CD8-positive, alpha-beta T cell (primary cell): ENCODE measurements at regions of chr6 and their contacts with region 1.

Region 1: DNA sequence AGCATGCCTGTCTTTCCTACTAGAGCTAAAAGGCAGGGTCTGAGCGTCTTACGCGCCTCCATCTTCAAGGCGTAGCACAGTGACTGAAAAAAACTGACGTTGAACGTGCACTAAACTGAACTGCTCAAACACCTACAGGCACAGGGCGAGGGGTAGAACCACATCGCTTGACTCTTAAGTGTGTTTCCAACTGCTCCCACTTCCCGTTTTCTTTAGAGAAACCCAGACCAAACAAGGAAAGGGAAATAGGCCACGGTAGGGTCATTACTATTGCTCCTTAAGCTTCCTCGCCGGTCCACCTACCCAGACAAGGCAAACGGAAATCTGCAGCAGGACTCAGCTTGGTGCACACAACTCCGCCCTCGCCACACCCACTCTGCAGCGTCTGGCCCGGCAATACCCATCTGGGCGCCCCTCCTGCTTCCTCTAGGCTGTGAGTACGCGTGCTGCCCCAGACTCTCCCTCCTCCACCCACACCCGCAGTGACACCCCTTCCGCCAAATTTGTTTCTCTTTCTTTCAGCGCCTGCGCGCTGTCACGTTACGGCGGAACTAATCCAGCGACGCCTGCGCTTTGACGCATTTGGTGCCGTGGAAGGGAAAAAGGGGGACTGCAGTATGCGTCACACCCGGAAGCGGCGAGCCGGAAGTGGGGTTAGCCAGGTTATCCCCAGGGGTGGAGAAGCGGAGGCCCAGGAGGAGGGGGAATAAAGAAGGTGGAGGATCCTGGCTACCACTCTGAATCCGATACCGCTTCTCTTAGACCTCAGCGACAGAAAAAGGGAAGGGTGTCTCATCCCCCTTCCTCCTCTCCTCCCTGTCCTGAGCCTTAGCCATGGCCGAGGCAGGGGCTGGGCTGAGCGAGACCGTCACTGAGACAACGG is at the start of gene PPP1R11:
- DNase-seq: peak; percentile 96 to 100 (median 98)
- ATAC-seq: peak; percentile 96
- H3K4me3 ChIP-seq: peak within 1 kb of the TSS; percentile 95 to 98
- H3K4me3 Mint-ChIP-seq: peak within 1 kb of the TSS; percentile 100
- H3K27ac ChIP-seq: peak within 1 kb of the TSS; percentile 96 to 99
- H3K27ac Mint-ChIP-seq: peak within 1 kb of the TSS; percentile 100
- H3K4me1 ChIP-seq: peaks cover 44% of the 10 kb centered on the region
- H3K4me1 Mint-ChIP-seq: peaks cover 56% of the 10 kb centered on the region
- H3K27me3 ChIP-seq: peaks cover 0 to 1% of the 10 kb centered on the region in 2 experiments
- H3K27me3 Mint-ChIP-seq: peaks cover 12% of the 10 kb centered on the region
- CTCF ChIP-seq: no peak
- total RNA-seq, gene PPP1R11: 24.7 to 28.3 TPM

Region 2: DNA sequence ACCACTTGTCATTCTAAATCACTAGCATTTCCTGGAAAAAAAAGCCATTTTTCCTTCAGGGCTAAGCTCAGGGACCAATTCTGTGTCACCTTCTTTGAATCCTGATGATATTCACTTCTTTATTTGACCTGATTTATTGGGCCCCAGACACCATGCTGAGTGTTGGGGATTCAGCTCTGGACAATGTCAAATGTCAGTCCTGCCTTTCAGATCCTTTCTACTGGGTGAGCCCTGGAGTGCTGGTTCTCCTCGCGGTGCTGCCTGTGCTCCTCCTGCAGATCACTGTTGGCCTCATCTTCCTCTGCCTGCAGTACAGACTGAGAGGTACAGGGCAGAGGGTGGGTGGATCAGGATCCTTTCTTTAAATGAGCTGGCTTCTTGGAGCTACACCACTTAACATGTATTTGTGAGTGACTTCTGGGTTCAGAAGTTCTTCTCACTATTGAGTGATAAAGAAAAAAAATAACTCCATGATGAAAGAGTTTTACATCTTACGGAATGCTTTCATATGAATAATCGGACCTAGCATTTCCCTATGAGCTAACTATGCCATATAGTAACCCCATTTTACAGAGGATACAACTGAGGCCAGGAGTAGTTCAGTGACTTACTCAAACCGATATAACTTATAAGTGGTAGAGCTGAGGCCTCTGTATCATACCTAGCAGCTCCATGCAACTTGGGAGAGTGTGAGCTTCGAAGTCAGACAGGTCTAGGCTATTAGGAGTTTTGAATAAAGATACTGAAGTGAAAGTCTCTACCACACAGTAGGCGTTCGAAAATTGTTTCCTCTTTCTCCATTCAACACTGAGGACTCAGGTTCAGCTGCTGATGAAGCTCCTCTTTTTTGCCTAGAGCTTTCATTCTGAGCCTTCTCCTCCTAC is 400.6 kb before region 1 on chr6:
- CTCF ChIA-PET with region 1: no interaction called
- POLR2A ChIA-PET with region 1: no interaction called
- intact Hi-C with region 1: no loop called
- DNase-seq: no peak
- ATAC-seq: no peak
- H3K4me3 ChIP-seq: no peak overlapping the region
- H3K4me3 Mint-ChIP-seq: no peak overlapping the region
- H3K27ac ChIP-seq: no peak overlapping the region
- H3K27ac Mint-ChIP-seq: no peak overlapping the region
- H3K4me1 ChIP-seq: no peaks in the 10 kb centered on the region
- H3K4me1 Mint-ChIP-seq: no peaks in the 10 kb centered on the region
- H3K27me3 ChIP-seq: peaks cover 5 to 8% of the 10 kb centered on the region in 2 experiments
- H3K27me3 Mint-ChIP-seq: peaks cover 30% of the 10 kb centered on the region
- CTCF ChIP-seq: no peak

Region 3: GRCh38 chr6:29723262-29723665 is 343.6 kb before region 1 on chr6 and contains the start of gene HLA-F:
- CTCF ChIA-PET with region 1: interaction called, 4 read pairs
- POLR2A ChIA-PET with region 1: no interaction called
- intact Hi-C with region 1: loop called in 1 of 2 experiments (anchors 10 kb)
- DNase-seq: peak; percentile 69 to 98 (median 85)
- ATAC-seq: peak; percentile 77
- H3K4me3 ChIP-seq: peak within 1 kb of the TSS; percentile 98
- H3K4me3 Mint-ChIP-seq: peak within 1 kb of the TSS; percentile 93
- H3K27ac ChIP-seq: peak within 1 kb of the TSS; percentile 88 to 100
- H3K27ac Mint-ChIP-seq: peak within 1 kb of the TSS; percentile 97
- H3K4me1 ChIP-seq: peaks cover 48% of the 10 kb centered on the region
- H3K4me1 Mint-ChIP-seq: peaks cover 56% of the 10 kb centered on the region
- H3K27me3 ChIP-seq: no peaks in the 10 kb centered on the region
- H3K27me3 Mint-ChIP-seq: no peaks in the 10 kb centered on the region
- CTCF ChIP-seq: no peak
- total RNA-seq, gene HLA-F: 378 to 382 TPM

Region 4: DNA sequence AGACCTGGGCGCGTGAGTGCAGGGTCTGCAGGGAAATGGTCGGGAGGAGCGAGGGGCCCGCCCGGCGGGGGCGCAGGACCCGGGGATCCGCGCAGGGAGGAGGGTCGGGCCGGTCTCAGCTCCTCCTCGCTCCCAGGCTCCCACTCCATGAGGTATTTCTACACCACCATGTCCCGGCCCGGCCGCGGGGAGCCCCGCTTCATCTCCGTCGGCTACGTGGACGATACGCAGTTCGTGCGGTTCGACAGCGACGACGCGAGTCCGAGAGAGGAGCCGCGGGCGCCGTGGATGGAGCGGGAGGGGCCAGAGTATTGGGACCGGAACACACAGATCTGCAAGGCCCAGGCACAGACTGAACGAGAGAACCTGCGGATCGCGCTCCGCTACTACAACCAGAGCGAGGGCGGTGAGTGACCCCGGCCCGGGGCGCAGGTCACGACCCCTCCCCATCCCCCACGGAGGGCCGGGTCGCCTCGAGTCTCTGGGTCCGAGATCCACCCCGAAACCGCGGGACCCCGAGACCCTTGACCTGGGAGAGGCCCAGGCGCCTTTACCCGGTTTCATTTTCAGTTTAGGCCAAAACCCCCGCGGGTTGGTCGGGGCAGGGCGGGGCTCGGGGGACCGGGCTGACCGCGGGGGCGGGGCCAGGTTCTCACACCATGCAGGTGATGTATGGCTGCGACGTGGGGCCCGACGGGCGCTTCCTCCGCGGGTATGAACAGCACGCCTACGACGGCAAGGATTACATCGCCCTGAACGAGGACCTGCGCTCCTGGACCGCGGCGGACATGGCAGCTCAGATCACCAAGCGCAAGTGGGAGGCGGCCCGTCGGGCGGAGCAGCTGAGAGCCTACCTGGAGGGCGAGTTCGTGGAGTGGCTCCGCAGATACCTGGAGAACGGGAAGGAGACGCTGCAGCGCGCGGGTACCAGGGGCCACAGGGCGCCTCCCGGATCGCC is 178.7 kb before region 1 on chr6:
- CTCF ChIA-PET with region 1: no interaction called
- POLR2A ChIA-PET with region 1: no interaction called
- intact Hi-C with region 1: loop called in 1 of 2 experiments (anchors 5 kb)
- DNase-seq: peak; percentile 79 to 94 (median 85)
- ATAC-seq: peak; percentile 86
- H3K4me3 ChIP-seq: peak overlapping the region; percentile 72 to 83
- H3K4me3 Mint-ChIP-seq: peak overlapping the region; percentile 85
- H3K27ac ChIP-seq: peak overlapping the region; percentile 91 to 97
- H3K27ac Mint-ChIP-seq: peak overlapping the region; percentile 88
- H3K4me1 ChIP-seq: peaks cover 10% of the 10 kb centered on the region
- H3K4me1 Mint-ChIP-seq: peaks cover 8% of the 10 kb centered on the region
- H3K27me3 ChIP-seq: no peaks in the 10 kb centered on the region
- H3K27me3 Mint-ChIP-seq: no peaks in the 10 kb centered on the region
- CTCF ChIP-seq: no peak

Region 5: GRCh38 chr6:29965873-29966601 is 100.8 kb before region 1 on chr6:
- CTCF ChIA-PET with region 1: no interaction called
- POLR2A ChIA-PET with region 1: no interaction called
- intact Hi-C with region 1: no loop called
- DNase-seq: peak in 7 of 9 experiments; percentile 32 to 82 (median 65)
- ATAC-seq: no peak
- H3K4me3 ChIP-seq: peak overlapping the region; percentile 22 to 44
- H3K4me3 Mint-ChIP-seq: no peak overlapping the region
- H3K27ac ChIP-seq: peak overlapping the region in 1 of 2 experiments; percentile 82
- H3K27ac Mint-ChIP-seq: no peak overlapping the region
- H3K4me1 ChIP-seq: peaks cover 30% of the 10 kb centered on the region
- H3K4me1 Mint-ChIP-seq: peaks cover 25% of the 10 kb centered on the region
- H3K27me3 ChIP-seq: no peaks in the 10 kb centered on the region
- H3K27me3 Mint-ChIP-seq: no peaks in the 10 kb centered on the region
- CTCF ChIP-seq: no peak

Region 6: GRCh38 chr6:30102970-30103874 is 36.4 kb after region 1 on chr6:
- CTCF ChIA-PET with region 1: interaction called, 9 read pairs
- POLR2A ChIA-PET with region 1: interaction called, 6 read pairs
- intact Hi-C with region 1: loop called in 1 of 2 experiments (anchors 2 kb)
- DNase-seq: peak; percentile 72 to 91 (median 83)
- ATAC-seq: peak; percentile 89
- H3K4me3 ChIP-seq: peak overlapping the region; percentile 51 to 64
- H3K4me3 Mint-ChIP-seq: peak overlapping the region; percentile 87
- H3K27ac ChIP-seq: peak overlapping the region in 1 of 2 experiments; percentile 42
- H3K27ac Mint-ChIP-seq: peak overlapping the region; percentile 56
- H3K4me1 ChIP-seq: peaks cover 38% of the 10 kb centered on the region
- H3K4me1 Mint-ChIP-seq: peaks cover 40% of the 10 kb centered on the region
- H3K27me3 ChIP-seq: peaks cover 0 to 23% of the 10 kb centered on the region in 2 experiments
- H3K27me3 Mint-ChIP-seq: peaks cover 41% of the 10 kb centered on the region
- CTCF ChIP-seq: peak; percentile 91

Region 7: DNA sequence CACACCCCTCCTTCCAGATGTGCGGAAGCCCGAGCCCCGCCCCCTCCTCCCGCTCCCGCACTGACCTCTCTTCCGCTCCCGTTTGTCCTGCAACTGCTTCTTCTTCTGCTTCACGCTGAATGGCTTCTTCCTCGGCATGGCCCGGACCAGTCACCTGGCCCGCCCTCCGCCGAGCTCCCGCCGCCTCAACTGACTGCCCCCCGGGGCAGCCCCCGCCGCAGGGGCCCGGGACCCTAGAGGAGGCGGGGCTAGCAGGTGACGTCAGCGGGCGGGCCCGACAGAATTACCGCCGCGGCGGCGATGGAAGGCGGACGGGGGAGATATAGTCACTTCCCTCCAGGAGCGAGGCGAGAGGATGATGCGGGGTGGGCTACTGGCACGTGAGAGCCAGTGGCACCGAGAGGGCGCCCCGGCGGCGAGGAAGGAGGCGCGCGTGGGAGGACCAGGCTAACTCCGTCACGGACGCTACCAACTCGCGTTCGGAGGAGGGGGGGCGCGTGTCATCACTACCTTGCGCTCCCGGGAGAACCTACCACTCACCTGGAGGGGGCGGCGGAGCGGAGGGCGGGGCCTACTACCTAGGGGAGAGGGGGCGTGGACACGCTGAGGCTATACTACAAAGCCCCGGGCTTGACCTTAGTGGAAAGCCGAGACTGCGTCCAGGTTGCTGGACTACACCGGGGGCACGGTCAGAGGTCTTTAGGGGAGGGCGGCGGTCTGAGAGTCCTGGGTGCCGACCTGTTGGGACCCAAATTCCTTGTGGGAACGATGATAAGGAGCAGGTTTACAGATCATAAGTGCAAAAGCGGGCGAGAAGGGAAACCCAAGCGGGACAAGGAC is 489.5 kb after region 1 on chr6 and contains the start of gene GNL1:
- CTCF ChIA-PET with region 1: no interaction called
- POLR2A ChIA-PET with region 1: no interaction called
- intact Hi-C with region 1: loop called in 1 of 2 experiments (anchors 10 kb)
- DNase-seq: peak; percentile 97 to 100 (median 99)
- ATAC-seq: peak; percentile 90
- H3K4me3 ChIP-seq: peak within 1 kb of the TSS; percentile 75 to 92
- H3K4me3 Mint-ChIP-seq: peak within 1 kb of the TSS; percentile 95
- H3K27ac ChIP-seq: peak within 1 kb of the TSS; percentile 98 to 99
- H3K27ac Mint-ChIP-seq: peak within 1 kb of the TSS; percentile 99
- H3K4me1 ChIP-seq: peaks cover 25% of the 10 kb centered on the region
- H3K4me1 Mint-ChIP-seq: peaks cover 42% of the 10 kb centered on the region
- H3K27me3 ChIP-seq: no peaks in the 10 kb centered on the region
- H3K27me3 Mint-ChIP-seq: no peaks in the 10 kb centered on the region
- CTCF ChIP-seq: no peak
- total RNA-seq, gene GNL1: 148 to 159 TPM

Region 8: GRCh38 chr6:30907758-30908591 is 841.2 kb after region 1 on chr6 and contains the start of gene GTF2H4:
- CTCF ChIA-PET with region 1: no interaction called
- POLR2A ChIA-PET with region 1: no interaction called
- intact Hi-C with region 1: loop called in 1 of 2 experiments (anchors 5 kb)
- DNase-seq: peak; percentile 89 to 97 (median 95)
- ATAC-seq: peak; percentile 99
- H3K4me3 ChIP-seq: peak within 1 kb of the TSS; percentile 84 to 94
- H3K4me3 Mint-ChIP-seq: peak within 1 kb of the TSS; percentile 100
- H3K27ac ChIP-seq: peak within 1 kb of the TSS; percentile 34 to 54
- H3K27ac Mint-ChIP-seq: peak within 1 kb of the TSS; percentile 83
- H3K4me1 ChIP-seq: peaks cover 11% of the 10 kb centered on the region
- H3K4me1 Mint-ChIP-seq: peaks cover 25% of the 10 kb centered on the region
- H3K27me3 ChIP-seq: no peaks in the 10 kb centered on the region
- H3K27me3 Mint-ChIP-seq: no peaks in the 10 kb centered on the region
- CTCF ChIP-seq: no peak
- total RNA-seq, gene GTF2H4: 7.0 to 7.5 TPM

Region 9: GRCh38 chr6:31971993-31972708 is 1905.3 kb after region 1 on chr6 and contains the start of gene DXO:
- CTCF ChIA-PET with region 1: no interaction called
- POLR2A ChIA-PET with region 1: no interaction called
- intact Hi-C with region 1: loop called in 1 of 2 experiments (anchors 10 kb)
- DNase-seq: peak; percentile 91 to 100 (median 97)
- ATAC-seq: peak; percentile 93
- H3K4me3 ChIP-seq: peak within 1 kb of the TSS; percentile 66 to 90
- H3K4me3 Mint-ChIP-seq: peak within 1 kb of the TSS; percentile 96
- H3K27ac ChIP-seq: peak within 1 kb of the TSS; percentile 98 to 99
- H3K27ac Mint-ChIP-seq: peak within 1 kb of the TSS; percentile 100
- H3K4me1 ChIP-seq: peaks cover 22% of the 10 kb centered on the region
- H3K4me1 Mint-ChIP-seq: peaks cover 37% of the 10 kb centered on the region
- H3K27me3 ChIP-seq: no peaks in the 10 kb centered on the region
- H3K27me3 Mint-ChIP-seq: no peaks in the 10 kb centered on the region
- CTCF ChIP-seq: no peak
- total RNA-seq, gene DXO: 20.8 to 22.2 TPM

Region 10: GRCh38 chr6:32047850-32048766 is 1981.3 kb after region 1 on chr6:
- CTCF ChIA-PET with region 1: no interaction called
- POLR2A ChIA-PET with region 1: no interaction called
- intact Hi-C with region 1: no loop called
- DNase-seq: peak; percentile 39 to 81 (median 71)
- ATAC-seq: peak; percentile 78
- H3K4me3 ChIP-seq: no peak overlapping the region
- H3K4me3 Mint-ChIP-seq: peak overlapping the region; percentile 26
- H3K27ac ChIP-seq: no peak overlapping the region
- H3K27ac Mint-ChIP-seq: no peak overlapping the region
- H3K4me1 ChIP-seq: no peaks in the 10 kb centered on the region
- H3K4me1 Mint-ChIP-seq: peaks cover 4% of the 10 kb centered on the region
- H3K27me3 ChIP-seq: no peaks in the 10 kb centered on the region
- H3K27me3 Mint-ChIP-seq: no peaks in the 10 kb centered on the region
- CTCF ChIP-seq: peak; percentile 93